Activated CD4-positive, alpha-beta memory T cell treated with anti-CD3 and anti-CD28 coated beads, Interleukin-2, amount 10 ng/mL, durations not matched to agents 7 days and 5 days (primary cell): ENCODE measurements at regions of chr1 and their contacts with region 1.

Region 1: GRCh38 chr1:196660852-196661251 is 9.0 kb downstream of the CFH start:
- DNase-seq: no peak
- H3K4me3 Mint-ChIP-seq: no peak overlapping the region
- H3K27ac Mint-ChIP-seq: no peak overlapping the region
- H3K4me1 Mint-ChIP-seq: peaks cover 16% of the 10 kb centered on the region
- H3K27me3 Mint-ChIP-seq: no peaks in the 10 kb centered on the region

Region 2: GRCh38 chr1:196148367-196148970 is 512.4 kb before region 1 on chr1:
- CTCF ChIA-PET with region 1: interaction called, 12 read pairs
- POLR2A ChIA-PET with region 1: no interaction called
- DNase-seq: no peak
- H3K4me3 Mint-ChIP-seq: no peak overlapping the region
- H3K27ac Mint-ChIP-seq: no peak overlapping the region
- H3K4me1 Mint-ChIP-seq: no peaks in the 10 kb centered on the region
- H3K27me3 Mint-ChIP-seq: no peaks in the 10 kb centered on the region

Region 3: GRCh38 chr1:196640976-196641375 is 19.9 kb before region 1 on chr1:
- CTCF ChIA-PET with region 1: no interaction called
- POLR2A ChIA-PET with region 1: no interaction called
- DNase-seq: no peak
- H3K4me3 Mint-ChIP-seq: no peak overlapping the region
- H3K27ac Mint-ChIP-seq: no peak overlapping the region
- H3K4me1 Mint-ChIP-seq: no peaks in the 10 kb centered on the region
- H3K27me3 Mint-ChIP-seq: peaks cover 11% of the 10 kb centered on the region